A673 (cell line): ENCODE measurements at regions of chr6 and their contacts with region 1.

Region 1: DNA sequence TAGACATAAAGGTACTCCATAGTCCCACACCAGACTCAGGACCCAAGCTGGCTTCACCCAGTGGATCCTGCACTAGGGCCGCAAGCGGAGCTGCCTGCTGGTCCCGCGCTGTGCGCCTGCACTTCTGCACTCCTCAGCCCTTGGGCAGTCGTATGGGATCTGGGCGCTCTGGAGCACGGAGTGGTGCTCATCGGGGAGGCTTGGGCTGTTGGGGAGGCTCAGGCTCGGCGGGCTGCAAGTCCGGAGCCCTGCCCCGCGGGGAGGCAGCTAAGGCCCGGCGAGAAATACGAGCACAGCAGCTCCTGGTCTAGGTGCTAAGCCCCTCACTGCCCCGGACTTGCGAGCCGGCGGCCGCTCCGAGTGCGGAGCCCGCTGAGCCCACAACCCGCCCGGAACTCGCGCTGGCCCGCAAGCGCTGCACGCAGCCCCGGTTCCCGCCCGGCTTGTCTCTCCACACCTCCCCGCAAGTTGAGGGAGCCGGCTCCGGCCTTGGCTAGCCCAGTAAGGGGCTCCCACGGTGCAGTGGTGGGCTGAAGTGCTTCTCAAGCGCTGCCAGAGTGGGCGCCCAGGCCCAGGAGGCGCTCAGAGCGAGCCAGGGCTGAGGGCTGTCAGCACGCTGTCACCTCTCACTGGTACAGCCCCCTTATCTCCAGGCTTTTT is 33.4 kb upstream of the GCNT2 start:
- DNase-seq: no peak
- H3K4me3 ChIP-seq: no peak overlapping the region
- H3K27ac ChIP-seq: no peak overlapping the region
- H3K4me1 ChIP-seq: no peaks in the 10 kb centered on the region
- H3K27me3 ChIP-seq: no peaks in the 10 kb centered on the region
- CTCF ChIP-seq: no peak

Region 2: GRCh38 chr6:10740061-10740460 is 252.3 kb after region 1 on chr6:
- CTCF ChIA-PET with region 1: no interaction called
- POLR2A ChIA-PET with region 1: interaction called, 18 read pairs
- intact Hi-C with region 1: no loop called
- DNase-seq: no peak
- H3K4me3 ChIP-seq: no peak overlapping the region
- H3K27ac ChIP-seq: no peak overlapping the region
- H3K4me1 ChIP-seq: no peaks in the 10 kb centered on the region
- H3K27me3 ChIP-seq: no peaks in the 10 kb centered on the region
- CTCF ChIP-seq: no peak